ENCODE measurements at regions of chr9 and their contacts with region 1.

Region 1: DNA sequence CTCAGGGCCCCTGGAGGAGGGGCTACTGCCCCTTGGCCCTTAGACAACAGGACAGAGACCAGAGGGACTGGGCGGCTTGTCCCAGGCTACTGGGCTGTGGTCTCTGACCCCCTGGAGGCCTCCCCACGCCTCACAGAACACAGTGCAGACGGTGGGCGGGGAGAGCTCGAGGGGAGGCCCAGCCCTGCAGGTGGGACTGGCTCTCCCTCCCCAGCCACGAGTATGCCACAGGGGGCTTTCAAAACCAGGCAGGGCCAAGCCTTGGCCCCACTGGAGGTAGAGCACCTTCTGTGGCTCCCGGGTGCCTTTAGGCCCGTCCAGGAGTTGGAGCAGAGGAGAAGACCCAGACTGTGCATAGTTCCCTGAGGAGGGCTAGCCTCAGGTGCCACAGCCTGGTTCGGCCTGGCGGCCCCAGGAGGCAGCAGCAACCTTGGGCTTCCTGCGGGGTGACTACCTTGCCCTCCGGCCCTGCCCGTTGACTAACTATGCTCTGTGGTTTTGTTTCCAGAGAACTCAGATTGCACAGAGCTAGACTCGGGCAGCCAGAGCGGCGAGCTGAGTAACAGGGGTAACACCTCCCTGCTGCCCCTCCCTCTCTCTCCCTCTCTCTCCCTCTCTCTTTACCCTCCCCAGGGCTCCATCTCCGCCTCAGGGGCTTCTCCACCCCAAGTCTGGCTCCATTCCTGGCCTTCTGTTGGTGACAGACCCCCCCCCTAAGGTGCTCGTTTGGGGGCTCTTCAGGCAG is 15.5 kb downstream of the CARD19 start:
- DNase-seq: no peak
- ATAC-seq: no peak
- H3K4me3 ChIP-seq: no peak overlapping the region
- H3K4me3 Mint-ChIP-seq: no peak overlapping the region
- H3K27ac ChIP-seq: no peak overlapping the region
- H3K27ac Mint-ChIP-seq: no peak overlapping the region
- H3K4me1 ChIP-seq: peaks cover 21 to 29% of the 10 kb centered on the region in 2 donors
- H3K4me1 Mint-ChIP-seq: peaks cover 30% of the 10 kb centered on the region
- H3K27me3 ChIP-seq: no peaks in the 10 kb centered on the region
- H3K27me3 Mint-ChIP-seq: no peaks in the 10 kb centered on the region
- CTCF ChIP-seq: no peak

Region 2: DNA sequence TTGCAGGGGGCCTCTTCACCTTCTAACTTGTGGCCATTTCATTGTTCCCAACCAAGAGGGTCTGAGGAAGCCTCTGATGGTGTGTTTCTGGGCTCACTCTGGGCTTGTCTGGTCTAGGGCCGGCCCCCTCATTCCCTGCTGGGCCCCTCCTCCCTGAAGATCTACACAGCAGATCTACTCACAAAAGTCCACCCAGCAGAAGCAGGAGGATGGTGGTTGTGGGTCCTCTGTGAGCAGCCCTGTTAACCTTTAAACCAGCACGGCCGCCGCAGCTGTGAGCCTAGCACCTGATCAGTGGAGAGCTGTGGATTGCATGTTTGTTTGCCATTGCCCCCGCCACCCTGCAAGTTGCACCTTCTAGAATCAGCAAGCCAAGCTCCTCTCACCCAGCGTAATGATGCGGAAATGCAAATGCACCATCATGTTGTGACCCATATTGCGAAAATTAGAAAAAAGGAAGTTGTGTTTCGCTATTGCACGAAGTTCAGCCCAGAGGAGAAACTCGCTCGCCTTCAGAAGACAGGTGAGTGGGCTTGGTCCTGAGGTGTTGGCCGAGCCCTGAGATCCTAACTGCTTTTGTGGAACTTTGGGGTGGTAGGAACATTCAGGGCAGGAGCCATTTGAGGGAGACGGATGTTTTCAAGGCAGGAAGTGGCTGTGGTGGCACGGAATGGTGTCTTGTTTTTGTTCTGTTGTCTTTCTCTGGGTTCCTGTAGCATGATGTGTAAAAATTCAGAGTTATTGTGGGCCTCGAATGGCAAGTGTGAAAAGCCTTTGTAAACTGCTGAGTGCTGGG is 147.5 kb before region 1 on chr9:
- CTCF ChIA-PET with region 1: interaction called, 31 read pairs
- POLR2A ChIA-PET with region 1: interaction called, 3 read pairs
- intact Hi-C with region 1: no loop called
- DNase-seq: peak; percentile 88
- ATAC-seq: peak; percentile 80
- H3K4me3 ChIP-seq: peak overlapping the region; percentile 75 to 92 (median 86)
- H3K4me3 Mint-ChIP-seq: peak overlapping the region; percentile 96
- H3K27ac ChIP-seq: peak overlapping the region; percentile 78 to 83
- H3K27ac Mint-ChIP-seq: peak overlapping the region; percentile 98
- H3K4me1 ChIP-seq: peaks cover 58 to 74% of the 10 kb centered on the region in 2 donors
- H3K4me1 Mint-ChIP-seq: peaks cover 75% of the 10 kb centered on the region
- H3K27me3 ChIP-seq: no peaks in the 10 kb centered on the region
- H3K27me3 Mint-ChIP-seq: no peaks in the 10 kb centered on the region
- CTCF ChIP-seq: no peak

Region 3: GRCh38 chr9:93028448-93029006 is 83.0 kb before region 1 on chr9:
- CTCF ChIA-PET with region 1: interaction called, 14 read pairs
- POLR2A ChIA-PET with region 1: no interaction called
- intact Hi-C with region 1: loop called (anchors 1 kb)
- DNase-seq: peak; percentile 81
- ATAC-seq: peak; percentile 91
- H3K4me3 ChIP-seq: peak overlapping the region in 4 of 5 experiments; percentile 4 to 38 (median 22)
- H3K4me3 Mint-ChIP-seq: peak overlapping the region; percentile 85
- H3K27ac ChIP-seq: peak overlapping the region; percentile 70 to 72
- H3K27ac Mint-ChIP-seq: peak overlapping the region; percentile 95
- H3K4me1 ChIP-seq: peaks cover 33 to 49% of the 10 kb centered on the region in 2 donors
- H3K4me1 Mint-ChIP-seq: peaks cover 61% of the 10 kb centered on the region
- H3K27me3 ChIP-seq: no peaks in the 10 kb centered on the region
- H3K27me3 Mint-ChIP-seq: no peaks in the 10 kb centered on the region
- CTCF ChIP-seq: no peak

Region 4: GRCh38 chr9:93159601-93160471 is 48.3 kb after region 1 on chr9:
- CTCF ChIA-PET with region 1: no interaction called
- POLR2A ChIA-PET with region 1: no interaction called
- intact Hi-C with region 1: no loop called
- DNase-seq: peak; percentile 78
- ATAC-seq: peak; percentile 98
- H3K4me3 ChIP-seq: no peak overlapping the region
- H3K4me3 Mint-ChIP-seq: no peak overlapping the region
- H3K27ac ChIP-seq: no peak overlapping the region
- H3K27ac Mint-ChIP-seq: no peak overlapping the region
- H3K4me1 ChIP-seq: peaks cover 4 to 6% of the 10 kb centered on the region in 2 donors
- H3K4me1 Mint-ChIP-seq: peaks cover 4% of the 10 kb centered on the region
- H3K27me3 ChIP-seq: peaks cover 0 to 3% (median 0%) of the 10 kb centered on the region in 4 experiments
- H3K27me3 Mint-ChIP-seq: no peaks in the 10 kb centered on the region
- CTCF ChIP-seq: peak; percentile 97

Region 5: GRCh38 chr9:93302551-93303257 is 191.2 kb after region 1 on chr9:
- CTCF ChIA-PET with region 1: interaction called, 26 read pairs
- POLR2A ChIA-PET with region 1: no interaction called
- intact Hi-C with region 1: no loop called
- DNase-seq: peak; percentile 82
- ATAC-seq: peak; percentile 82
- H3K4me3 ChIP-seq: no peak overlapping the region
- H3K4me3 Mint-ChIP-seq: no peak overlapping the region
- H3K27ac ChIP-seq: no peak overlapping the region
- H3K27ac Mint-ChIP-seq: no peak overlapping the region
- H3K4me1 ChIP-seq: peaks cover 0 to 5% of the 10 kb centered on the region in 2 donors
- H3K4me1 Mint-ChIP-seq: no peaks in the 10 kb centered on the region
- H3K27me3 ChIP-seq: no peaks in the 10 kb centered on the region
- H3K27me3 Mint-ChIP-seq: peaks cover 7% of the 10 kb centered on the region
- CTCF ChIP-seq: peak; percentile 62

Measured in B cell (primary cell).